ENCODE measurements at regions of chr7 and their contacts with region 1.

Region 1: GRCh38 chr7:150988230-150989226 is 2.3 kb upstream of the NOS3 start:
- DNase-seq: peak; percentile 93
- ATAC-seq: peak; percentile 68
- H3K4me3 Mint-ChIP-seq: peak overlapping the region; percentile 71
- H3K27ac Mint-ChIP-seq: no peak overlapping the region
- H3K4me1 Mint-ChIP-seq: peaks cover 32% of the 10 kb centered on the region
- H3K27me3 Mint-ChIP-seq: peaks cover 32% of the 10 kb centered on the region
- CTCF ChIP-seq: peak; percentile 92

Region 2: DNA sequence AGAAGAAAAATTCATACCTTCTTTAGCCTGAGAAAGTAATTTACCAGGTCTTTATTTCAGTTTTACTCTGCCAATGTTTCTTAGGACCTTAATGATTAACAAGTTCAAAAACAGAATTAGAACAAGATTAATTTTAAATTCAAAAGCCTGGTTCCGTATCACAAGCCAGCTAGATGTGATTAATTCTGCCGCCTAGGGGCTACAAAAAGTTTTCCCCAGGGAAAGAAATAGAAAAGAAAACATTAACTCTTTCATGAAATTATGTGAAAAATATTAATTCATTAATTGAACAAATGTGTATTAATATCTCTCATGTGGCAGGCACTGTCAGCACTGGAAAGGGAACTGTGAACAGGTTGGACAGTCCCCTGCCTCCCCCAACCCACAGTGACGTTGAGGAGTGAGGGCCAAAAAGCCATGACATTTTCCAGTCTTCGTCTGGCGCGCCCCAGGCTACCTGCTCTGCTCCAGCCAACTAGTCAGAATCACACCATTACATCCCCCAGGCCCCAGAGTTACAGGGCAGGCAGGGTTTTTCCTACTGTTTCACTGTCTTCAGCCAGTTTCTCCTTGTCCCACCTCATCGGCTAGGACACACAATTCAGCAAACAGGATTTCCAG is 167.8 kb before region 1 on chr7:
- CTCF ChIA-PET with region 1: no interaction called
- POLR2A ChIA-PET with region 1: no interaction called
- DNase-seq: no peak
- ATAC-seq: no peak
- H3K4me3 Mint-ChIP-seq: no peak overlapping the region
- H3K27ac Mint-ChIP-seq: no peak overlapping the region
- H3K4me1 Mint-ChIP-seq: peaks cover 13% of the 10 kb centered on the region
- H3K27me3 Mint-ChIP-seq: peaks cover 4% of the 10 kb centered on the region
- CTCF ChIP-seq: no peak

Region 3: DNA sequence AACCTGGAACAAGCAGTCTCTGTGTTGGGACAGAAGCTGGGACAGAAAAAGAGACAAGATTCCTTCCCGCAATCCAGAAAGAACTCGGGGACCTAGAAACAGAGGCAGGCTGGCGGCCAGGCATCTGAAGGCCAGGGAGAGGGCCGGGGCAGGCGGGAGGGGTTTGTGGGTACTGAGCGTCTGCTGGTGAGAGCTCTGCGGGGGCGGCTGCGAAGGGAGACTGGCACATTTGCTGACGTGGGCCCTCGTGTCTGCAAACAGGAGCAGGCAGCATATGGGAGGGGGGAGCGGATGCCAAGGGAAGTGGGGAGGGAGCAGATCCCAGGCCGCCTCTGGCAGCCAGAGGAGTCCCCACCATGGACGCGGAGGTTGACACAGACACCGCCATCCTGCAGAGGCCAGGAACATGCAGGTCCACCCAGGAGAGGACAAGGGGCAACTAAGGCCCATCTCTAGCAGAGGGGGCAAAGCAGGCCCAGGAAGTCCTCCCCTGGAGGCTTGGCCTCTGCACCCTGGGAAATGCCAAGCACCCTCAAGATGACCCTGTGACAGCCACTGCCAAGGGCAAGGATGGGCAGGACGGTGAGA is 42.6 kb before region 1 on chr7:
- CTCF ChIA-PET with region 1: interaction called, 18 read pairs
- POLR2A ChIA-PET with region 1: no interaction called
- DNase-seq: no peak
- ATAC-seq: no peak
- H3K4me3 Mint-ChIP-seq: no peak overlapping the region
- H3K27ac Mint-ChIP-seq: no peak overlapping the region
- H3K4me1 Mint-ChIP-seq: peaks cover 48% of the 10 kb centered on the region
- H3K27me3 Mint-ChIP-seq: peaks cover 6% of the 10 kb centered on the region
- CTCF ChIP-seq: no peak

Region 4: GRCh38 chr7:150968734-150969372 is 19.7 kb before region 1 on chr7:
- CTCF ChIA-PET with region 1: interaction called, 96 read pairs
- POLR2A ChIA-PET with region 1: interaction called, 5 read pairs
- DNase-seq: no peak
- ATAC-seq: no peak
- H3K4me3 Mint-ChIP-seq: no peak overlapping the region
- H3K27ac Mint-ChIP-seq: no peak overlapping the region
- H3K4me1 Mint-ChIP-seq: peaks cover 40% of the 10 kb centered on the region
- H3K27me3 Mint-ChIP-seq: no peaks in the 10 kb centered on the region
- CTCF ChIP-seq: no peak

Region 5: DNA sequence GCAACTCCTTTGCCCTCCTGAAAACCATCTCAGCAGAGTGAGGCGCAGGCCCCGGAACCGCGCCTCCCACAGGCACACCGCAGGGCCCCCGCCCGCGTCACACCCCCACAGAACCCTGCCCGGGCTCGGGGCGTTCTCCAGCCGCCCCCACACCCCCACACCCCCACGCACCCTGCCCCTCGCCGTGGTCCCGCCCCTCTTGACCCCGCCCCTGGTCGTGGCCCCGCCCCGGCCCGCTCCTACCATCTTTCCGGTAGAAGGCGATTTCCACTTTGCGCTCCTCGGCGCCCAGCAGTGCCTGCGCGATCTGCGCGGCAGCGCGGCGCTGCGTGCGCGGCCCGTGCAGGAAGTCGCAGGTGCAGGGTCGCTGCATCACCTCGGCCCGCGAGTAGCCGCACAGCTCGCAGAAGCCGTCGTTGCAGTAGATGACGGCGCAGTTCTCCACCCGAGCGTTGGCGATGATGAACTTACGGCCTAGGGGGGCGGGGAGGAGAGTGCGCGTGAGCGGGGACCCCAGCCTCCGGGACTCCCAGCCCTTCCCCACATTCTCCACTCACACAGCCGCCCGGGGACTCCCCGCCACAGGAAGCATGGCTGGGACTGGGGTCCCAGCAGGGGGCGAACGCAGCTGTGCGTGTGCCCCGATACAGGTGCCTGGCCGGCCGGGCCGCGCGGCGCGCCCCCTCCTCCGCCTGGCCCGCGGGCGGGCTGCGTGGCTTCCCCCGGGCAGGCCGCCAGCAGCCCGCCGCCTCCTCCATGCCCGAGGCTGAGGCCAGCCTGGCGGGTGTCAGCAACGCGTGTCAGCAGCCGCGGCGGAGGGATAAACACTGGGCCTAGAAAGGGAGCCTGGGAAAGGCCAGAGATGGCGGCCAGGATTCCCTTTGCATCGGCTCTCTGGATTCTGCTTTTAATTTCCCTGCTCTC is 13.8 kb before region 1 on chr7:
- CTCF ChIA-PET with region 1: interaction called, 50 read pairs
- POLR2A ChIA-PET with region 1: interaction called, 4 read pairs
- DNase-seq: peak; percentile 62
- ATAC-seq: peak; percentile 2; the same call in 1 of the 2 replicates
- H3K4me3 Mint-ChIP-seq: peak overlapping the region; percentile 82
- H3K27ac Mint-ChIP-seq: no peak overlapping the region
- H3K4me1 Mint-ChIP-seq: peaks cover 52% of the 10 kb centered on the region
- H3K27me3 Mint-ChIP-seq: peaks cover 30% of the 10 kb centered on the region
- CTCF ChIP-seq: no peak